AG04450 (cell line): ENCODE measurements at regions of chr5 and their contacts with region 1.

Region 1: DNA sequence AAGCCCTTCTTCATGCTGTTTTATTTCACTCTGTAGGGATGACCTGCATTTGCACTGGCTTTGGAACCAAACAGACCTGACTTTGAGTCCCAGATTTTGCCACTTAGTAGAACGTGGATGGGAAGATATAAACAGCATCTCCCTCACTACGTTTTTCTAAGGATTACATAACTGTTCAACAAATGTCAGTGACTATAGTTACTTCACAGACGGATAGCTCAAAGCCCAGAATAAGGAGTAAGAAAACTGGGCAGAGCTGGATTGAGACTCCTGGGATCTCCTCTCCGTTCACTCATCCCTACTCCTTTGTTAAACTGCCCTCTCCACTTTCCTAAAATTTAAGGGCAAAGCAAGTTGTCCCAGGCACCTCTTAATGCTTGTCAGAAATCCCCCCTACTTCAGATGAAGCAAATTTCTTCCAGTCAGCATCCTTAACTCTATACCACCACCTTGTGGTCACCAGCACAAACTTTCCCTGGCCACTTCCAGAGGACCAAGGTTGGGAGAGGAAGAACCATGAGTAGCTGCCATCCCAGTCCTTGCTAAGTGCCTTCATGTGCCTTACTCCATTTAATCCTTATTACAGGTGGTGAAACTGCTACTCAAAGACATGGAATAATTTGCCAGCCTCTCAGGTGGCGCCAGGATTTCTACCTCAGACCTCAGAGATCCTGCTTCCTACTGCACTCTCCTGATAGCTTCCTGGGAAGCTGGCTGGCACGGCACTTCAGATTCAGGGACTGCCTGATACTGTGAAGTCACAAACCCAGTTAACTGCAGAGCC is 38.4 kb downstream of the EGR1 start:
- DNase-seq: peak; percentile 46
- H3K4me3 ChIP-seq: no peak overlapping the region
- H3K27ac ChIP-seq: peak overlapping the region; percentile 21
- H3K27me3 ChIP-seq: no peaks in the 10 kb centered on the region
- CTCF ChIP-seq: peak; percentile 88

Region 2: DNA sequence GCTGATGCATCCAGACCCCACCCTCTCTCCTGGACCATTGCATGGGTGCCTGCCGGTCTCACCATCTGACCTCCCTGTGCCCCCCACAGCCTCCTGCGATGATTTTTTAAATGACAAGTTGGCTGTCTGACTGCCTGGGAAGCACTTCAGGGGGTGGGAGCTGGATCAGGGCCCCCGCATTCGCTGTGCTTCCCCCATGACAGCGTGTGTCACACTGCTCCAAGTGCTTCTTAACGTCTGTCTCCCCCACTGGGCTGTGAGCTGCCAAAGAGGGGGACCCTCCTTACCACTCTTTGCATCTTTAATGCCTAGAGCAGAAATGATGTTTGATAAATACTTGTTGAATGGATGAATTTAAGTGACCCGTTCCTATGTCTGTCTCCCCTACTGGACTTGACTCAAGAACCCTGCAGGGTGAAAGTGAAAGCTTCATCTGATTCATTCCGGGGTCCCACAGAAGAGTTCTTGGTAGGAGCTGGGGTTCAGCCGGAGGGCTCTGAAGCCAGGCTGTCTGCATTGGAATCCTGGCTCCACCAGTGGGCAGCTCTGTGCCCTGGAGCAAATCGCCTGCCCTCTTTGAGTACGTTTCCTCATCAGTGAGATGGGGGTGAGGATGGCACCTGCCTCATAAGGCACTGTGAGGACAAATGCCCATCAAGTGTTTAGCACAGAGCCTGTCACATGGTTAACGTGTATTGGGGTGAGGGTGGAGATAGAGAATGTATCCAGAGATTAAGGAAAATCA is 46.0 kb before region 1 on chr5:
- CTCF ChIA-PET with region 1: interaction called, 86 read pairs
- POLR2A ChIA-PET with region 1: no interaction called
- DNase-seq: no peak
- H3K4me3 ChIP-seq: no peak overlapping the region
- H3K27ac ChIP-seq: no peak overlapping the region
- H3K27me3 ChIP-seq: peaks cover 2% of the 10 kb centered on the region
- CTCF ChIP-seq: no peak

Region 3: GRCh38 chr5:138491669-138492559 is 11.8 kb before region 1 on chr5:
- CTCF ChIA-PET with region 1: interaction called, 14 read pairs
- POLR2A ChIA-PET with region 1: interaction called, 4 read pairs
- DNase-seq: peak; percentile 74
- H3K4me3 ChIP-seq: peak overlapping the region; percentile 62
- H3K27ac ChIP-seq: no peak overlapping the region
- H3K27me3 ChIP-seq: no peaks in the 10 kb centered on the region
- CTCF ChIP-seq: no peak

Region 4: DNA sequence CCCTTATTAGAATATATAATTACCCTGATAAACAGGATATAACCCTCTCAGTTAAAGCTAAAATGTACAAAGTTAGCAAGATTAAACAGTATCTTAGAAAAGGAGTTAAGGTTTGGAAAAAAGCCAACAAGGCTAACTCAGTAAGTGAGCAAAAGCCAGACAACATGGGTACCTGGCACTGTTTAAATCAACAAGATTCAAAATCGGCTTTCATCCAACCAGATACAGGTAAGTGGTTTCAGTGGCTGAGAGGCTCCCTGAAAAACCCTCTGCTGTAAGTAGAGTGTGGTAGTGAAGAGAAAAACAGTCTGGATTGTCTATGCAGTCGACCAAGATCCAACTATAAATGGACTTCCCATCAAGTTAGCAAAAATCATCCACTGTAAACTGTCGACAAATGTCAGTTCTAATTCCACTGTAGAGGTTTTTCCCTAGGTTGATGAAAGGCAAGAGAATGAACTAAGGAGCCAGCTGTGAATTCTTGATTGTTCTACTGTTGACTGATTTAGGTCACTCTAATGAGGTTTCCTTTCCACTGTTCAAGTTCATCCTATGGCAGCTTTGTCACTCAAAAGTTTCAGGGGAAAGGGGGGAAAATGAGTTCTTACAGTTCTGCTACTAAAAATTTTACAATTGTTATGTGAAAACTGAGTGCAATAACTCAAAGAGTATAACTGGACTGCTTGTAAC is 12.0 kb after region 1 on chr5:
- CTCF ChIA-PET with region 1: interaction called, 12 read pairs
- POLR2A ChIA-PET with region 1: no interaction called
- DNase-seq: no peak
- H3K4me3 ChIP-seq: no peak overlapping the region
- H3K27ac ChIP-seq: no peak overlapping the region
- H3K27me3 ChIP-seq: no peaks in the 10 kb centered on the region
- CTCF ChIP-seq: no peak